ENCODE measurements at regions of chr6 and their contacts with region 1.

Region 1: DNA sequence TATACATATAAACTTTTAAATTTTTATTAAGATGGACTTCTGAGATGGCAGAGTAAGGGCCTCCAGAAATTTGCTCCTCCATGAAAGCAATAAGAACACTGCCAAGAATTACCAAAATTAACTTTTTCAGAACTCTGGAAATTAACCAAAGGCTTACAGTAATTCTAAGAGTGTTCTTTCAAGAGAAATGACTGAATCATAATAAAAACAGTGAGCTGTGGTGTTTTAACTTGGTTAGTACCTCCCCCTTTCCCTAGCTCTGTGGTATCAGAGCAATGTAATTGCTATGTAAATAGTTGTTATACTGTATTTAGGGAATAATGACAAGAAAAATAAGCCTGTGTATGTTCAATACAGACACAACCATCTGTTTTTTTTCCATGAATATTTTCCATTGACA is 19.0 kb downstream of the HECA start:
- DNase-seq: no peak
- H3K4me3 Mint-ChIP-seq: peak overlapping the region; percentile 61
- H3K27ac Mint-ChIP-seq: peak overlapping the region; percentile 83
- H3K4me1 Mint-ChIP-seq: peaks cover 64% of the 10 kb centered on the region
- H3K27me3 Mint-ChIP-seq: no peaks in the 10 kb centered on the region

Region 2: GRCh38 chr6:139134817-139135581 is 18.9 kb before region 1 on chr6 and contains the start of gene HECA:
- intact Hi-C with region 1: loop called (anchors 1 kb)
- DNase-seq: peak; percentile 100
- H3K4me3 Mint-ChIP-seq: peak within 1 kb of the TSS; percentile 98
- H3K27ac Mint-ChIP-seq: peak within 1 kb of the TSS; percentile 97
- H3K4me1 Mint-ChIP-seq: peaks cover 60% of the 10 kb centered on the region
- H3K27me3 Mint-ChIP-seq: no peaks in the 10 kb centered on the region
- total RNA-seq, gene HECA: 45.7 and 47.7 TPM in 2 replicates

Region 3: DNA sequence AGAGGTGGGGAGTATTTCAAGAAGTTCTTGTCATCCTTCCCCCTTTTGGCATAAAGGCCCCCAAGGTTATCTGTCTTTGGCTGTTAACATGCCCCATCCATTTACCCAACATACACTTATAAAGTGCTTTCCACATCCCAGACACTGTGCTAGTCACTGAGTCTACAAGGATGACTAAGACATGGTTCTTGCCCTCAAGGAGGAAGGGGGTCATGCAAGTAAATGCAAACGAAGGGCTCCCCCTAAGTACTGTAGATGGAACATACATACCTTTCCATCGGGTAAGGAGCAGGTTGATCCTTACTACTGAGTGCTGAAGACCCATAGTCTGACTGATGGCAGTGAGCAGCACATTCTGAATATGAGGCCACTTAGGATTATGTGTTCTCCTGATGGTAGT is 19.3 kb after region 1 on chr6:
- intact Hi-C with region 1: loop called (anchors 1 kb)
- DNase-seq: peak; percentile 61
- H3K4me3 Mint-ChIP-seq: peak overlapping the region; percentile 32
- H3K27ac Mint-ChIP-seq: peak overlapping the region; percentile 79
- H3K4me1 Mint-ChIP-seq: peaks cover 78% of the 10 kb centered on the region
- H3K27me3 Mint-ChIP-seq: no peaks in the 10 kb centered on the region

Region 4: DNA sequence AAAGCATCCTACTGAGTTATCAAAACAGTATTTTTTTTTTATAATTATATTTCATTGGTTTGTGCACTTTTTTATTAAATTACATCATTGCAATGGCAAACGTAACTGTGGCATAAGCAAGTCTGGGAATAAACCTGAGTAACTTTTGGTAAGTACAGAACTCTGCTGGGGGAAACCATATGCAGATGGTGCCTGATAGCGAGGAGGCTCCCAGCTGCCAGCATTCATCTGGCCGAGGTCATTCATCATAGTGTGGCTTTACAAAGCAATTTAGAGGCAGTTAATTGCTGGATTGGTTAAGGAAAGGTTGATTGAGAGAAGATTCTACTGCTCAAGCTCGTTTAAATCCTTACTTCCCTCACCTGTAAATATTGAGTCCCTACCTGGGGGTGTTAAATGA is 33.6 kb after region 1 on chr6:
- intact Hi-C with region 1: loop called (anchors 2 kb)
- DNase-seq: no peak
- H3K4me3 Mint-ChIP-seq: no peak overlapping the region
- H3K27ac Mint-ChIP-seq: no peak overlapping the region
- H3K4me1 Mint-ChIP-seq: peaks cover 24% of the 10 kb centered on the region
- H3K27me3 Mint-ChIP-seq: no peaks in the 10 kb centered on the region

Region 5: DNA sequence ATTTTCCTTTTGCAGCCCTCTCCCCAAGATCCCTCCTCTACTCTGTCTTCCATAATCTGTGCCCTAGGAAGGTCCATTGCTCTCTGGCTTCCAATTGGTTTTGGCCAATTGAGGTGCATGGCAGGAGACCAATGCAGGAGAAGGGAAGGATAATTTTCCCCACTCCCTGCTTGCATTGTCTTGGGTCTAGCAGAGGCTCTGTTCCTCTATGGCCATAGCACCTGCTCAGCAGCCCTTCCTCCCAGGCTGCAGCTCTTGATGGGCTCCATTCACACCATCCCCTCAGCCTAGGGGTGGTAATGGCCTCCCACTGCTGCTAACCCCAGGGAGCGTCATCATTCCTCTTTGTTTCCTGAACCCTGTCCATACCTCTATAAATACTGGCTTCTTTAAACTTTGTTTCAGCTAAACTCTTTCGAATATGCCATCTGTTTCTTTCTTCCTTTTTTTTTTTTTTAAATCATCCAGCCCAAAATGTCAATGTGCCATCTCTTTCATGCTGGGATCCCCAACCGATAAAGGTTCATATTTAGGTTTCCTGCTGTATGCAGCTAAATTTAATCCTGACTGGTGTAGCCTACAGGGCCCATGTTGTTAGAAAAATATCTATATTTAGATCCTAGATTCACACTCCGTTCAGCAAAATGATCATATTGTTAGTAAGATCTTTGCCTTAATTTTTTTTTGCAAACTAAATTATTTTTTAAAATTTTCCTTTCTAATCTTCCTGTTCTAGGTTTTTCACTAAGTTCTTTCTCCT is 44.9 kb after region 1 on chr6:
- intact Hi-C with region 1: no loop called
- DNase-seq: no peak
- H3K4me3 Mint-ChIP-seq: no peak overlapping the region
- H3K27ac Mint-ChIP-seq: no peak overlapping the region
- H3K4me1 Mint-ChIP-seq: peaks cover 2% of the 10 kb centered on the region
- H3K27me3 Mint-ChIP-seq: no peaks in the 10 kb centered on the region

Region 6: DNA sequence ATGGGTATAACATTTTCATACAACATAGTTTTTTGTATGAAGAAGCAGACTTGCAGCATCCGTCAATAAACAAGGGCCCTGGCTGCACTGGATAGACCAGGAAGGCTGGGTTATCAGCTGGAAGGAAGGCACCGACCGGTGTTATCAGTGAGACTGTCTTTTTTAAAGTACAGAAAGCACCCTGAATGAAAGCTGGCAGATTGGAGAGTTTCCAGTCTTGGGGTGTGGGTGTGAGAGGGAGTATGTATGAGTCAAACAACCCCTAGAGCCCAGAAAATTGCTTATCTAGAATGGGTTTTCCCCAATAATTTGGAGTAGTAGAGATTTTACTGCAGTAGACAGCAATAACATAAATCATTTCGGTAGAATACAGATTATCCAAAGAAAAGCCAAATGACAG is 95.5 kb after region 1 on chr6:
- intact Hi-C with region 1: loop called (anchors 1 kb)
- DNase-seq: peak; percentile 70
- H3K4me3 Mint-ChIP-seq: peak overlapping the region; percentile 52
- H3K27ac Mint-ChIP-seq: peak overlapping the region; percentile 91
- H3K4me1 Mint-ChIP-seq: peaks cover 46% of the 10 kb centered on the region
- H3K27me3 Mint-ChIP-seq: no peaks in the 10 kb centered on the region

Region 7: DNA sequence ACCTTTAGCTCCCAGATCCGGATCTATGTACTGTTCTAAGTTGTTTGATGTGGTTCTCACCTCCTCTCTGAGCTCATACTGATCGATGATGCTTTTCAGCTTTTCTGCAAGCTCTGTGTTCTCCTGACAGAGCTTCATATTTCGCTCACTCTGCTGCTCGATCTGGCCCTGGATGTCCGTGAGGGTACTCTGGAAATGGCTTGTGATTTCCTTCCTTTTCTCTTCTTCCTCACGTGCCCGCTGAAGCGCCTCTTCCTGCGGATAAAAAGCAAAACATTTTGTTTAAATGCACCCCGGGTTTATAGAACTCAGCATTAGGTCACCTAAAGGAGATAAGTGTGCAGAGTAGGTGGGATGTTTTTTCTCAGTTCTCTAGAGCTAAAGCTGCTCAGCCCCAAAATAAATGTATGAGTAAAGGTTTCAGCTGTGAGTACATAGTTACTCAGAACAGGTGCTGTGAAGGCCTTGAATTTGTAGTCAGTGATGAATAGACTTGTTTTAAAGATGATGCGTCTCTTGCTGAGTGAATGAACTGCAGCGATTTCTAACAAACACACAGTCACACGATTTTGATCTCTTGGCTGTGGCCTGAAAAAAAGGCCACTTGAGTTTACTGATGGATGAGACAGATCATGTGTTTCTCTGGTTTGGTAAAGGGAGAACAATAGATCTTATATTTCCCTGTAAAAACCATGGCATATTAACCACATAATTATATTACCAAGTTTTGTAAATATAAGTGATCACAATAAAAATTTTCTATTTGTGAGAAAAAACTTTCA is 108.9 kb after region 1 on chr6:
- intact Hi-C with region 1: loop called (anchors 2 kb)
- DNase-seq: peak; percentile 77
- H3K4me3 Mint-ChIP-seq: peak overlapping the region; percentile 75
- H3K27ac Mint-ChIP-seq: peak overlapping the region; percentile 90
- H3K4me1 Mint-ChIP-seq: peaks cover 21% of the 10 kb centered on the region
- H3K27me3 Mint-ChIP-seq: no peaks in the 10 kb centered on the region